RWPE1 (cell line): ENCODE measurements at regions of chr15 and their contacts with region 1.

Region 1: GRCh38 chr15:74598126-74598842 is 17.4 kb upstream of the CLK3 start:
- DNase-seq: peak; percentile 99
- H3K27ac ChIP-seq: peak overlapping the region; percentile 84
- CTCF ChIP-seq: no peak

Region 2: GRCh38 chr15:74584779-74585178 is 13.5 kb before region 1 on chr15:
- CTCF ChIA-PET with region 1: interaction called, 3 read pairs
- POLR2A ChIA-PET with region 1: interaction called, 21 read pairs
- DNase-seq: no peak
- H3K27ac ChIP-seq: no peak overlapping the region
- CTCF ChIP-seq: no peak